ENCODE measurements at regions of chr14 and their contacts with region 1.

Region 1: GRCh38 chr14:31320216-31320615 is 100.1 kb downstream of the HEATR5A start:
- DNase-seq: no peak
- ATAC-seq: no peak
- H3K4me3 Mint-ChIP-seq: no peak overlapping the region
- H3K27ac Mint-ChIP-seq: no peak overlapping the region
- H3K4me1 Mint-ChIP-seq: no peaks in the 10 kb centered on the region
- H3K27me3 Mint-ChIP-seq: no peaks in the 10 kb centered on the region
- CTCF ChIP-seq: no peak

Region 2: DNA sequence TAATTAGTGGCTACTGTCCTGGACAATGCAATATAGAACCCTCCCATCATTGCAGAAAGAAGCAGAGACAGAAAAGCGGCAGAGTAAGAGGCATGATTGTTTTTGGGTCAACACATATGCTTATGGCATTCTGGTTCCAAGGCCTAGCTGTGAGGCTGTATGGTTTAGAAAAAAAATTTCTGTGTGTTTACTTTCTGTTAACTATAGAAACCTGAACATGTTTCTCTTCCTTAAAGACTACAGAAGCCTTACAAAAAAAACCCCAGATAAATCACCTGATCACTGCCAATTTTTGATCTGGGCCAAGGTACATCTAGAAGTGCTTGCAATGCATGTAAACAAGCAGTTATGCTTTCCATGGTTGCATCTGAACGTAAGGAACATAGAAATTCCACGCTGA is 12.6 kb before region 1 on chr14:
- CTCF ChIA-PET with region 1: no interaction called
- POLR2A ChIA-PET with region 1: interaction called, 15 read pairs
- intact Hi-C with region 1: no loop called
- DNase-seq: no peak
- ATAC-seq: no peak
- H3K4me3 Mint-ChIP-seq: no peak overlapping the region
- H3K27ac Mint-ChIP-seq: no peak overlapping the region
- H3K4me1 Mint-ChIP-seq: no peaks in the 10 kb centered on the region
- H3K27me3 Mint-ChIP-seq: no peaks in the 10 kb centered on the region
- CTCF ChIP-seq: no peak

Measured in activated B cell treated with CpG ODN at 0.5 μM for 24 hours (primary cell).